WTC11 (cell line): ENCODE measurements at regions of chr20 and their contacts with region 1.

Region 1: GRCh38 chr20:63537525-63538203 is 488 bp upstream of the PTK6 start:
- DNase-seq: peak; percentile 87
- ATAC-seq: peak; percentile 84
- H3K4me3 Mint-ChIP-seq: peak overlapping the region; percentile 49
- H3K27ac Mint-ChIP-seq: no peak overlapping the region
- H3K4me1 Mint-ChIP-seq: 0 out of 2 replicates have a peak, but pooled peaks cover 2% of the 10 kb centered on the region
- H3K27me3 Mint-ChIP-seq: no peaks in the 10 kb centered on the region
- CTCF ChIP-seq: peak; percentile 93

Region 2: GRCh38 chr20:63520504-63520933 is 17.1 kb before region 1 on chr20 and contains the start of gene PPDPF:
- CTCF ChIA-PET with region 1: interaction called, 33 read pairs
- POLR2A ChIA-PET with region 1: interaction called, 5 read pairs
- DNase-seq: peak; percentile 78
- ATAC-seq: peak; percentile 72
- H3K4me3 Mint-ChIP-seq: peak within 1 kb of the TSS; percentile 88
- H3K27ac Mint-ChIP-seq: peak within 1 kb of the TSS; percentile 79
- H3K4me1 Mint-ChIP-seq: peaks cover 14% of the 10 kb centered on the region
- H3K27me3 Mint-ChIP-seq: peaks cover 9% of the 10 kb centered on the region; the same call in 1 of the 2 replicates
- CTCF ChIP-seq: no peak
- total RNA-seq, gene PPDPF: 170 to 210 TPM (median 205 TPM) in 3 replicates

Region 3: GRCh38 chr20:63627129-63627750 is 89.6 kb after region 1 on chr20:
- CTCF ChIA-PET with region 1: interaction called, 17 read pairs
- POLR2A ChIA-PET with region 1: no interaction called
- DNase-seq: peak; percentile 92
- ATAC-seq: peak; percentile 75
- H3K4me3 Mint-ChIP-seq: peak overlapping the region; percentile 65
- H3K27ac Mint-ChIP-seq: no peak overlapping the region
- H3K4me1 Mint-ChIP-seq: peaks cover 21% of the 10 kb centered on the region
- H3K27me3 Mint-ChIP-seq: peaks cover 3% of the 10 kb centered on the region; the same call in 1 of the 2 replicates
- CTCF ChIP-seq: no peak

Region 4: GRCh38 chr20:63698739-63699465 is 161.2 kb after region 1 on chr20:
- CTCF ChIA-PET with region 1: interaction called, 19 read pairs
- POLR2A ChIA-PET with region 1: no interaction called
- DNase-seq: no peak
- ATAC-seq: no peak
- H3K4me3 Mint-ChIP-seq: no peak overlapping the region
- H3K27ac Mint-ChIP-seq: no peak overlapping the region
- H3K4me1 Mint-ChIP-seq: peaks cover 7% of the 10 kb centered on the region
- H3K27me3 Mint-ChIP-seq: no peaks in the 10 kb centered on the region
- CTCF ChIP-seq: no peak

Region 5: DNA sequence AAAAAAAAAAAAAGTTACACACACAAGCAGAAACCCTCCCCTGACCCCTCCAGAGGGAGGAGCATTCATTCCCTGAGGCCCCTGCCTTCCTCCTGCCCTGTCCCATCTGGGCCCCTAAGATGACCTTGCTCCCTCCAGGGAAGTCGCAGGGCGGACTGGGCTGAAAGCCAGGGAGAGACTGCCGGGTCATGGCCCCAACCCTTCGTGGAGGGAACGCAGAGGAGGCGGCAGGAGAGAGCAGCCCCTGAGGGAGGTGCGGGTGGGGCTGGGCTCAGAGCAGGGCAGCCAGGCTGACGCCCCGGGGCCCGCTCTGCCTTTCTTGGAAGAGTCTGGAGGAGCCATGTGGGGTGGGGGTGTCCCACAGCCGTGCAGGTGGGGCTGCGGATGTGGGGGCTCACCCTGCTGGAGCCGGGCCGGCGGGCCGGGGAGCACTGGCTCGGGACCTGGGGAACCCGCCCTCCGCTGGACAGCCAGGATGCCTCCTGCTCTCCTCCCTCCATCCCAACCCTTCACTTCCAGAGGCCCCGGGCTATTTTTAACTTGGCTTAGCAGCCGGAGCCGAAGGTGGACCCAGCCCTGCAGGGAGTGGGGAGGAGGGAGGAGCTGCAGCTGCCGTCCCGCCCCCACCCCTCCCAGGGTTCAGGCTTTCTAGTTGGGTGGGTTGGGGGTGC is 308.6 kb after region 1 on chr20:
- CTCF ChIA-PET with region 1: interaction called, 15 read pairs
- POLR2A ChIA-PET with region 1: no interaction called
- DNase-seq: peak; percentile 70
- ATAC-seq: peak; percentile 65
- H3K4me3 Mint-ChIP-seq: peak overlapping the region; percentile 75
- H3K27ac Mint-ChIP-seq: peak overlapping the region; percentile 88
- H3K4me1 Mint-ChIP-seq: peaks cover 24% of the 10 kb centered on the region
- H3K27me3 Mint-ChIP-seq: no peaks in the 10 kb centered on the region; the same call in none of the 2 replicates
- CTCF ChIP-seq: no peak